ENCODE measurements at regions of chr1 and their contacts with region 1.

Region 1: GRCh38 chr1:172398970-172399755 is 21.3 kb upstream of the C1orf105 start:
- DNase-seq: peak in 1 of 2 donors; percentile 54
- ATAC-seq: peak; percentile 80 to 92 (median 86)
- H3K4me3 ChIP-seq: peak overlapping the region in 3 of 10 donors; percentile 8 to 22 (median 12)
- H3K27ac ChIP-seq: peak overlapping the region; percentile 3 to 78 (median 58)
- H3K4me1 ChIP-seq: peaks cover 0 to 51% (median 40%) of the 10 kb centered on the region in 9 donors
- H3K27me3 ChIP-seq: no peaks in the 10 kb centered on the region
- CTCF ChIP-seq: peak; percentile 53 to 80 (median 65)

Region 2: DNA sequence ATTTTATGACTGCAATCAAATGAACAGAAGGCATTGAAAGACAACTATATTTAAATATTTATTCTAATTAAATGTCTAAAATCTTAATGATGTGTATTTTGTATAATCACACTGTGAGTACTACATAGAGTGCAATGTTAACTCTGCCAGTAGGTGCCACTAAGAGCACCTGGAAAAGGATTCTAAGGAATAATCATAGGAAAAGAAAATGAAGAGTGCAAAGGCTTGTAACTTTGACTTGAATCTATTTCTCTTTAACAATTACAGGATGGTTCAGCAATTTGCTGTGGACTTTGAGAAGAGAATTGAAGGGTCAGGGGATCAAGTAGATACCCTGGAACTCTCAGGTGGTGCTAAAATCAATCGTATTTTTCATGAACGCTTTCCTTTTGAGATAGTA is 357.4 kb before region 1 on chr1:
- intact Hi-C with region 1: loop called in 2 of 10 experiments (anchors 5 to 10 kb)
- DNase-seq: no peak
- ATAC-seq: peak in 3 of 8 donors; percentile 48 to 62 (median 61)
- H3K4me3 ChIP-seq: peak overlapping the region in 3 of 10 donors; percentile 18 to 25 (median 18)
- H3K27ac ChIP-seq: peak overlapping the region in 2 of 10 donors; percentile 15 to 21
- H3K4me1 ChIP-seq: no peaks in the 10 kb centered on the region
- H3K27me3 ChIP-seq: no peaks in the 10 kb centered on the region
- CTCF ChIP-seq: peak in 8 of 9 donors; percentile 24 to 63 (median 48)

Region 3: GRCh38 chr1:172135076-172135672 is 264.0 kb before region 1 on chr1:
- intact Hi-C with region 1: loop called in 6 of 10 experiments (anchors 5 to 10 kb)
- DNase-seq: no peak
- ATAC-seq: no peak
- H3K4me3 ChIP-seq: no peak overlapping the region
- H3K27ac ChIP-seq: peak overlapping the region in 1 of 10 donors; percentile 91
- H3K4me1 ChIP-seq: peaks cover 0 to 19% (median 2%) of the 10 kb centered on the region in 9 donors
- H3K27me3 ChIP-seq: no peaks in the 10 kb centered on the region
- CTCF ChIP-seq: peak; percentile 44 to 65 (median 58)

Region 4: GRCh38 chr1:172286629-172287076 is 112.5 kb before region 1 on chr1:
- intact Hi-C with region 1: loop called in 2 of 10 experiments (anchors 10 kb)
- DNase-seq: no peak
- ATAC-seq: peak in 6 of 8 donors; percentile 61 to 91 (median 72)
- H3K4me3 ChIP-seq: no peak overlapping the region
- H3K27ac ChIP-seq: peak overlapping the region in 8 of 10 donors; percentile 25 to 69 (median 49)
- H3K4me1 ChIP-seq: peaks cover 0 to 30% (median 11%) of the 10 kb centered on the region in 9 donors
- H3K27me3 ChIP-seq: no peaks in the 10 kb centered on the region
- CTCF ChIP-seq: no peak

Region 5: DNA sequence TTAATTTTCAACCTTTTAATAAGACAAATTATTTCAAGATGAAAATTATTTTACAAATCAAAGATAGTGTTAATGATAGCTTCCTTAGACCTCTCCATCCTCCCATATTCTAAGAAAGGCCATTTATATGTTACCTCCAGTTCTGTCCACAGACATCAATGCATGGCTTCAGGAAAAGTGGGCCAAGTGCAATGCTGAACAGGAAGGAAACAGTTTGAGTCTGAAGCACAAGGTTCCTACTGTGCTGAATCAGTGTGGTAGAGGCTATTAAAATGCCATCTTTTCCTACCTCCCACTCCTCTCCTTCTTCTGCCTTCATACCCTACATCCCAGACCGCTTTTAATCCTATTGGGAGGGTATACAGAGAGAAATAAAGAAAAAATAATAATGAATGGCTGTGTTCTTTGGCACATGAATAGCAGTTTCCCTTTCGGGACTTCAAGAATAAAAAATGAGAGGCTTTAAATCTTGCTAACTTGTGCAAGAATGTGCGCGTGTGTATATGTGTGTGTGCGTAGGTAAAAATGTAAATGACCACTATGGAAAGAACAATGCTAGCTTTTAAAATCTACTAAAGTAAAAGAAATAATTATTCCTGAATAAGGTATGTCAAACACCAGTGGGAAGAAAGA is 41.3 kb before region 1 on chr1:
- intact Hi-C with region 1: loop called in 2 of 10 experiments (anchors 5 kb)
- DNase-seq: no peak
- ATAC-seq: peak in 3 of 8 donors; percentile 8 to 27 (median 22)
- H3K4me3 ChIP-seq: peak overlapping the region in 6 of 10 donors; percentile 3 to 27 (median 12)
- H3K27ac ChIP-seq: peak overlapping the region; percentile 53 to 88 (median 82)
- H3K4me1 ChIP-seq: peaks cover 8 to 59% (median 49%) of the 10 kb centered on the region in 9 donors
- H3K27me3 ChIP-seq: no peaks in the 10 kb centered on the region
- CTCF ChIP-seq: no peak

Measured in heart right ventricle (tissue), 16 donors.